K562 (cell line): ENCODE measurements at regions of chr1 and their contacts with region 1.

Region 1: GRCh38 chr1:1847061-1847850 is 43.6 kb downstream of the GNB1 start:
- DNase-seq: peak in 2 of 4 experiments; percentile 40 to 75
- ATAC-seq: peak; percentile 86
- H3K4me3 ChIP-seq: no peak overlapping the region
- H3K27ac ChIP-seq: peak overlapping the region; percentile 22; the same call in 2 of the 3 replicates
- H3K4me1 ChIP-seq: peaks cover 7 to 17% of the 10 kb centered on the region in 2 experiments; a peak in 3 of 5 replicates
- H3K27me3 ChIP-seq: no peaks in the 10 kb centered on the region
- CTCF ChIP-seq: no peak
- EP300 ChIP-seq: peak; percentile 29; the same call in 1 of the 2 replicates
- POLR2A ChIP-seq: no peak
- RAD21 ChIP-seq: 0 out of 4 replicates have a peak, but pooled peaks of 1 of the 2 experiments have one; percentile 1

Region 2: GRCh38 chr1:1858382-1859086 is 11.3 kb after region 1 on chr1:
- CTCF ChIA-PET with region 1: no interaction called
- POLR2A ChIA-PET with region 1: interaction called, 10 read pairs
- in situ Hi-C with region 1: no loop called
- intact Hi-C with region 1: no loop called
- DNase-seq: peak; percentile 70 to 89 (median 78)
- ATAC-seq: peak; percentile 88
- H3K4me3 ChIP-seq: no peak overlapping the region
- H3K27ac ChIP-seq: no peak overlapping the region; the same call in 2 of the 3 replicates
- H3K4me1 ChIP-seq: peaks cover 22 to 24% of the 10 kb centered on the region in 2 experiments; a peak in 4 of 5 replicates
- H3K27me3 ChIP-seq: no peaks in the 10 kb centered on the region
- CTCF ChIP-seq: peak; percentile 56 to 78 (median 68)
- EP300 ChIP-seq: peak; percentile 55; the same call in 1 of the 2 replicates
- POLR2A ChIP-seq: no peak
- RAD21 ChIP-seq: peak in 1 of 2 experiments; percentile 63; a peak in 3 of 4 replicates

Region 3: GRCh38 chr1:1881727-1882126 is 34.5 kb after region 1 on chr1:
- CTCF ChIA-PET with region 1: no interaction called
- POLR2A ChIA-PET with region 1: no interaction called
- in situ Hi-C with region 1: no loop called
- intact Hi-C with region 1: no loop called
- DNase-seq: no peak
- ATAC-seq: no peak
- H3K4me3 ChIP-seq: no peak overlapping the region
- H3K27ac ChIP-seq: no peak overlapping the region
- H3K4me1 ChIP-seq: peaks cover 29 to 40% of the 10 kb centered on the region in 2 experiments; a peak in 4 of 5 replicates
- H3K27me3 ChIP-seq: no peaks in the 10 kb centered on the region
- CTCF ChIP-seq: no peak
- EP300 ChIP-seq: no peak
- POLR2A ChIP-seq: no peak
- RAD21 ChIP-seq: no peak